ENCODE measurements at regions of chr15 and their contacts with region 1.

Region 1: DNA sequence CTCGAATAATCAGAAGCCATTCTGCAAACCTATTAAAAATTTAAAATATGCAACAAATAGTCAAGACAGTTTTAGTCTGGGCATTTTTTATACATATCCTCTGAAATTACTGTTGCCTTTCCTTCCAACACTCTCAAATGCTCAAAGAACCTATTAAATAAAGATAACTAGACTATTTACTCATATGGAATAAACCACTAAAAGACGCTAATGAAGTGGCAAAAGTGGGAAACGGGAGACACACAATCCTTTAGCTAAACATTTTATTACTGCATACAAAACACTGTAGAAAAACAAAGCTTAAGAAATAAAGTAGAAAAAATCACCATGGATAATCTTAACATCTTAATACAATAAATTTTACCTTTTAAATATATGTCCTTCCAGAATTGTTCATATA is 75.4 kb downstream of the HERC1 start:
- DNase-seq: no peak
- H3K4me3 ChIP-seq: no peak overlapping the region
- H3K27ac ChIP-seq: no peak overlapping the region
- H3K4me1 ChIP-seq: no peaks in the 10 kb centered on the region
- H3K27me3 ChIP-seq: no peaks in the 10 kb centered on the region
- CTCF ChIP-seq: no peak

Region 2: GRCh38 chr15:63772520-63772919 is 14.2 kb after region 1 on chr15:
- CTCF ChIA-PET with region 1: interaction called, 10 read pairs
- POLR2A ChIA-PET with region 1: no interaction called
- intact Hi-C with region 1: no loop called
- DNase-seq: no peak
- H3K4me3 ChIP-seq: no peak overlapping the region
- H3K27ac ChIP-seq: no peak overlapping the region
- H3K4me1 ChIP-seq: no peaks in the 10 kb centered on the region
- H3K27me3 ChIP-seq: no peaks in the 10 kb centered on the region
- CTCF ChIP-seq: no peak